ENCODE measurements at regions of chr5 and their contacts with region 1.

Region 1: DNA sequence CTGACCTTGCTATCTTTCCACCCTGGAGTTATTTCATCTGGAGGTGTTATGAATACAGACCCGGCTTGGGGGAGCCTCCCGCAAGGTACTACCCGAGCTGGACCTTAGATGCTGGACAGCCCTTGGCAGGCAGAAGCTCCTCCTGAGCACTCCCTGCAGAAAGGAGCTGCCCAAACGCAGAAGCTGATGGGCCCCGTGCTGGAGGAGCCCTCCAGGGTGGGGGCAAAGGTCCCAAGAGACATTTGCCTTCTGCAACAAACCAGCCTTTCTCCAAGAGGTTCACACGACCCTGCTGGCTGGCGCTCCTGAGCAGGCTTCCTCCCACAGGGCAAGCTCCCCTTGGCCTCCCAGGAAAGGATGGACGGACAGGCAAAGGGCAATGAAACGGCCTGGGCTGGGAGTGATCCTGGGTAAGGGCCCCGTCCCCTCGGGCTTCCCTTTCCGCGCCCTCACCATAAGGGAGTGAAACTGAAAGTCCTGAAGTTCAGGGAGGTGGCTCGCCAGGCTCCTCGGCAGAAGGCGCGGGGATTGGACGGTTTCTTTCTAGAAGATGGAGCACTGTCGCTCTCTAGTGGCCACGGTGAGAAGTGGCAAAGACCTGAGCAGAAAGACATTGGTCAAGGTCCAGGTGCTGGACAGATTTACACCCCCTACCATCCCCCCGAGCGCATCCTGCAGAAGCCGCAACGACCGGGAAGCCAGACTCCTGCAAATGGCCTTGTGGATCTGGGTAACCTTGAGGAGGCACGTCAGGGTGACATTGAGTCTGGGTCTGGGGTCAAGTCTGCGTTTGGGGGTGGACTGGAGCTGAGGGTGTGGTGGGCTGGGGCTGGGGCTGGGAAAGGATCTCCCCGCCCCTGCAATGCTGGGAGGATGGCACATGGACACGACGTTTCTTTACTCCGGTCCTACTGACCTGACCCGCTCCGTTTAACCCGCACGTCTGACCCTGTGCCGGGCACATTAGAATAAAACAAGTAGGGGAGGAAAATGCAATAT is 56.4 kb downstream of the NEURL1B start:
- DNase-seq: peak; percentile 78 to 84 (median 81)
- ATAC-seq: peak; percentile 92
- H3K4me3 ChIP-seq: 0 out of 2 replicates have a peak overlapping the region, but pooled peaks have one; percentile 5
- H3K27ac ChIP-seq: no peak overlapping the region
- H3K4me1 ChIP-seq: peaks cover 0 to 12% of the 10 kb centered on the region in 2 experiments; a peak in 3 of 5 replicates
- H3K27me3 ChIP-seq: peaks cover 41 to 77% of the 10 kb centered on the region in 2 experiments
- CTCF ChIP-seq: peak; percentile 88 to 96 (median 93)
- EP300 ChIP-seq: no peak
- POLR2A ChIP-seq: no peak
- RAD21 ChIP-seq: peak; percentile 91 to 94

Region 2: DNA sequence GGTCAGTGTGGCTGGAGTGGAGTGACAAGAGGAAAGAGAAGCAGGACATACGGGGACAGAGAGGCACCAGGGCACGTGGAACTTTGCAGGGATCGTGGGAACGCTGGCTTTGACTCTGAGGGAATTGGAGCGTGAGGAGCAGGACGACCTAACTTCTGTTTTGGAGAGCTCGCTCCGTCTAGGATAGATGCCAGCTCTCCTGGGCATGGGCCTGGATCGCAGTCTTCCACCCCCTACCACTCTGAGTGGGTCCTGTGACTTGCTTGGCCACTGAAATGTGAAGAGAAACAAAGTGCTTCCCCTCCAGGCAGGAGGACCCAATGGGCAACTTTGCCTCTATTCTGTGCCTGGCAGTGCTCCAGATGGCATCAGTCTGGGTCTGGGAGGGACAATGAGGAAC is 234.4 kb before region 1 on chr5:
- CTCF ChIA-PET with region 1: interaction called, 11 read pairs
- POLR2A ChIA-PET with region 1: no interaction called
- in situ Hi-C with region 1: no loop called
- intact Hi-C with region 1: loop called (anchors 1 kb)
- DNase-seq: no peak
- ATAC-seq: no peak
- H3K4me3 ChIP-seq: no peak overlapping the region
- H3K27ac ChIP-seq: no peak overlapping the region
- H3K4me1 ChIP-seq: no peaks in the 10 kb centered on the region
- H3K27me3 ChIP-seq: peaks cover 0 to 13% of the 10 kb centered on the region in 2 experiments; a peak in 3 of 5 replicates
- CTCF ChIP-seq: no peak
- EP300 ChIP-seq: no peak
- POLR2A ChIP-seq: no peak
- RAD21 ChIP-seq: no peak

Region 3: GRCh38 chr5:172479044-172479783 is 218.2 kb before region 1 on chr5:
- CTCF ChIA-PET with region 1: interaction called, 36 read pairs
- POLR2A ChIA-PET with region 1: no interaction called
- in situ Hi-C with region 1: loop called (anchors 5 kb)
- intact Hi-C with region 1: loop called (anchors 1 kb)
- DNase-seq: peak; percentile 82 to 86 (median 83)
- ATAC-seq: peak; percentile 100
- H3K4me3 ChIP-seq: no peak overlapping the region
- H3K27ac ChIP-seq: no peak overlapping the region
- H3K4me1 ChIP-seq: no peaks in the 10 kb centered on the region
- H3K27me3 ChIP-seq: peaks cover 2 to 9% of the 10 kb centered on the region in 2 experiments; a peak in 3 of 5 replicates
- CTCF ChIP-seq: peak; percentile 88 to 98 (median 98)
- EP300 ChIP-seq: no peak
- POLR2A ChIP-seq: no peak
- RAD21 ChIP-seq: peak; percentile 92 to 98

Region 4: DNA sequence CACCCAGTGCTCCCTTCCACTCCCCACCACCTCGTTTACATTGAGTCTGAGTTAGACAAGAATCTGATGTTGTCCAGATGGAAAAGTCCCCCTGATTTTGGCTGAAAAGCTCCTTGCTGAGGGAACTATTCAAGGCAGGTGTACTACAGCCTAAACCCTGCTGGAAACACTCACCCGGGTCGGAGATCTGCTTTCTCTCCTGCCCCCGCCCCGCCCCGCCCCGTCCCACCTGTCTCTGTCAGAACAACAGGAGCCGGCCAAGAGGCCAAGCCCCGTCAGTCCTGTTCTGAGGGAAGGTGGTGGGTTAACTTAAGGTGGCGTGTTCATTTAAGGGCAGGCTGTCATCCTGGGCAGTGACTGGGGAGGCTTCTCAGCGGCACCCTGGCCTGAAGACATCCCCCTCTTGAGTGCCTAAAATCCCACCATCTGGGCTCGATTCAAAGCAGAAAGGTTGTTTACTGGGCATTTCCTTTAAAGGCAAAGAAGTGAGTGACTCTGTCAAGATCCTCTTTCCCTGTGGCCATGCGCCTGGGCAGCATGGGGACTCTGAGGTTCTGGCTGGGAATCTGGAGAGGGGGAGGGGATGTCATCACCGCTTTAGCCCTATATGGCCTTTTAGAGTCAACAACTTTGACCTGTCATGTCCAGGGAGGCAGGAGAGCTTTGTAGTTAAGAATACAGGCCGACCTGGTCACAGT is 127.4 kb before region 1 on chr5:
- CTCF ChIA-PET with region 1: no interaction called
- POLR2A ChIA-PET with region 1: interaction called, 3 read pairs
- in situ Hi-C with region 1: no loop called
- intact Hi-C with region 1: loop called (anchors 10 kb)
- DNase-seq: no peak
- ATAC-seq: no peak; the same call in 2 of the 3 replicates
- H3K4me3 ChIP-seq: no peak overlapping the region
- H3K27ac ChIP-seq: no peak overlapping the region
- H3K4me1 ChIP-seq: no peaks in the 10 kb centered on the region
- H3K27me3 ChIP-seq: peaks cover 0 to 46% of the 10 kb centered on the region in 2 experiments; a peak in 2 of 5 replicates
- CTCF ChIP-seq: no peak
- EP300 ChIP-seq: no peak
- POLR2A ChIP-seq: no peak
- RAD21 ChIP-seq: no peak

Region 5: GRCh38 chr5:172640822-172641358 is 56.5 kb before region 1 on chr5 and contains the start of gene NEURL1B:
- CTCF ChIA-PET with region 1: no interaction called
- POLR2A ChIA-PET with region 1: no interaction called
- in situ Hi-C with region 1: no loop called
- intact Hi-C with region 1: loop called (anchors 10 kb)
- DNase-seq: peak; percentile 77 to 99 (median 96)
- ATAC-seq: peak; percentile 98
- H3K4me3 ChIP-seq: peak within 1 kb of the TSS; percentile 36
- H3K27ac ChIP-seq: no peak within 1 kb of the TSS
- H3K4me1 ChIP-seq: peaks cover 4 to 15% of the 10 kb centered on the region in 2 experiments; a peak in 3 of 5 replicates
- H3K27me3 ChIP-seq: peaks cover 51 to 91% of the 10 kb centered on the region in 2 experiments
- CTCF ChIP-seq: no peak; a peak in 1 of 6 replicates
- EP300 ChIP-seq: no peak
- POLR2A ChIP-seq: no peak
- RAD21 ChIP-seq: no peak
- polyA plus RNA-seq, gene NEURL1B: not detected

Region 6: DNA sequence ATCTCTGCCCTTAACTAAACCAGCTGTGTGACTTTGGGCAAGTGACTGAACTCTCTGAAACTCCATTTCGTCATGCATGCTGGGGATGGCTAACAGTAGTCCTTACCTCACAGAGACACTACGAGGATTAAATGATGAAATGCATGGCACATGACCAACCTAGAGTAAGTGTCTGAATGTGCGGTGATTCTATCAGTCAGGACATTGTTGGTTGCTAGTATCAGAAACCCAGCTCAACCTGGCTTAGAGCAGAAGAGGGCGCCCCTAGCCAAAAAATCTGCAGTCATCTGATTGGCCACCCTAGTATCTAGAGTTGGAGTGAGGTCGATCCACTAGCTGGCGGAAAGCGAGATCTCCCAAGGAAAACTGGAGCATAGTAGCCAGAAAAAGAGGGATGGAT is 31.2 kb before region 1 on chr5:
- CTCF ChIA-PET with region 1: interaction called, 12 read pairs
- POLR2A ChIA-PET with region 1: interaction called, 3 read pairs
- in situ Hi-C with region 1: no loop called
- intact Hi-C with region 1: loop called (anchors 1 kb)
- DNase-seq: peak; percentile 42 to 60 (median 56)
- ATAC-seq: peak; percentile 95
- H3K4me3 ChIP-seq: no peak overlapping the region
- H3K27ac ChIP-seq: no peak overlapping the region
- H3K4me1 ChIP-seq: peaks cover 0 to 7% of the 10 kb centered on the region in 2 experiments; a peak in 1 of 5 replicates
- H3K27me3 ChIP-seq: peaks cover 18 to 68% of the 10 kb centered on the region in 2 experiments
- CTCF ChIP-seq: peak; percentile 45 to 63 (median 57)
- EP300 ChIP-seq: no peak
- POLR2A ChIP-seq: no peak
- RAD21 ChIP-seq: peak in 1 of 2 experiments; percentile 65; a peak in 2 of 4 replicates

Region 7: DNA sequence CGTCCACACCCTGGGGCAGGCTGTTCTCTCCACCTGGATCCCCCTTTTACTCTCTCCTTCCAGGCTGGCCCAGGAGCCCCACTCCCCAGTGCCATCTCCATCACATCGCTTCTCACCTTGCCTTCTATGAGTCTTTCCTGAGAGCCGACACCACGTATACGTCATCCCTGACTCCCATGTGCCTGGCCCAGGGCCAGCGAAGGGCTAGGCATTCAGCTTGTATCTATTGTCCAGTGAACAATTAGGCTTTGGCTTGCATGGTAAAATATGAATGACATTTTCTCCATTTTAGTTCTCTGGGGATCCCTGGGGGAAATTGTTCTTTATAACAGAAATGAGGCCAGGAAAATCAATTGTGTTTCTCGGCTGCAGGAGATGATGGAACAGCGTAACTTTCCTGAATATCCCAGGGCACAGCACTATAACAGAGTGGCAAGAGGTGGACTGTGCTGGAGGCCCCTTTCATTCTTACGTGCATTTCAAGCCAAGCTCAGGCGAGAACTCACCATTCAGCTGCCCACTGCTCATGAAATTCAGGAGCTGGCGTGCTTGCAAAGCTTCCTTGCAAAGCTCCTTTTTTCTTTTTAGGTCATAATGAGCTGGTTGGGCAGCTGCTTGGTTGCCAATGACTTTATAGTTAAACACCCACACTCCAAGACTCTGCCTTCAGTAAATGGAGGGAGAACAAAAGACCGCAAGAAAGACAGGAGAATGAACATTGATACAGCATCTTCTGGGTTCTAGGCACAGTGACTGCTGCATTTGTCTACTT is 1385.8 kb after region 1 on chr5:
- CTCF ChIA-PET with region 1: no interaction called
- POLR2A ChIA-PET with region 1: no interaction called
- in situ Hi-C with region 1: no loop called
- intact Hi-C with region 1: no loop called
- DNase-seq: no peak
- ATAC-seq: no peak
- H3K4me3 ChIP-seq: no peak overlapping the region
- H3K27ac ChIP-seq: no peak overlapping the region
- H3K4me1 ChIP-seq: no peaks in the 10 kb centered on the region
- H3K27me3 ChIP-seq: peaks cover 2 to 31% of the 10 kb centered on the region in 2 experiments; a peak in 3 of 5 replicates
- CTCF ChIP-seq: no peak
- EP300 ChIP-seq: no peak
- POLR2A ChIP-seq: no peak
- RAD21 ChIP-seq: no peak